Activated CD8-positive, alpha-beta T cell treated with anti-CD3 and anti-CD28 coated beads, Interleukin-2, amount 10 ng/mL, durations not matched to agents 7 days and 5 days (primary cell): ENCODE measurements at regions of chr11 and their contacts with region 1.

Region 1: GRCh38 chr11:72030472-72031045 is 31.9 kb downstream of the IL18BP start:
- DNase-seq: no peak
- ATAC-seq: no peak
- H3K4me3 Mint-ChIP-seq: no peak overlapping the region
- H3K27ac Mint-ChIP-seq: no peak overlapping the region
- H3K4me1 Mint-ChIP-seq: peaks cover 19% of the 10 kb centered on the region
- H3K27me3 Mint-ChIP-seq: no peaks in the 10 kb centered on the region

Region 2: GRCh38 chr11:71962428-71963038 is 68.0 kb before region 1 on chr11:
- CTCF ChIA-PET with region 1: no interaction called
- POLR2A ChIA-PET with region 1: no interaction called
- DNase-seq: no peak
- ATAC-seq: no peak
- H3K4me3 Mint-ChIP-seq: no peak overlapping the region
- H3K27ac Mint-ChIP-seq: no peak overlapping the region
- H3K4me1 Mint-ChIP-seq: peaks cover 7% of the 10 kb centered on the region
- H3K27me3 Mint-ChIP-seq: no peaks in the 10 kb centered on the region

Region 3: GRCh38 chr11:71998662-71999310 is 31.8 kb before region 1 on chr11 and contains the start of gene IL18BP:
- CTCF ChIA-PET with region 1: interaction called, 11 read pairs
- POLR2A ChIA-PET with region 1: no interaction called
- DNase-seq: peak; percentile 67
- ATAC-seq: peak; percentile 83
- H3K4me3 Mint-ChIP-seq: peak within 1 kb of the TSS; percentile 82
- H3K27ac Mint-ChIP-seq: peak within 1 kb of the TSS; percentile 97
- H3K4me1 Mint-ChIP-seq: peaks cover 22% of the 10 kb centered on the region
- H3K27me3 Mint-ChIP-seq: no peaks in the 10 kb centered on the region
- total RNA-seq, gene IL18BP: 15.9 to 16.2 TPM

Region 4: GRCh38 chr11:72048766-72049456 is 18.4 kb after region 1 on chr11:
- CTCF ChIA-PET with region 1: interaction called, 17 read pairs
- POLR2A ChIA-PET with region 1: no interaction called
- DNase-seq: no peak
- ATAC-seq: no peak
- H3K4me3 Mint-ChIP-seq: no peak overlapping the region
- H3K27ac Mint-ChIP-seq: no peak overlapping the region
- H3K4me1 Mint-ChIP-seq: no peaks in the 10 kb centered on the region
- H3K27me3 Mint-ChIP-seq: no peaks in the 10 kb centered on the region

Region 5: DNA sequence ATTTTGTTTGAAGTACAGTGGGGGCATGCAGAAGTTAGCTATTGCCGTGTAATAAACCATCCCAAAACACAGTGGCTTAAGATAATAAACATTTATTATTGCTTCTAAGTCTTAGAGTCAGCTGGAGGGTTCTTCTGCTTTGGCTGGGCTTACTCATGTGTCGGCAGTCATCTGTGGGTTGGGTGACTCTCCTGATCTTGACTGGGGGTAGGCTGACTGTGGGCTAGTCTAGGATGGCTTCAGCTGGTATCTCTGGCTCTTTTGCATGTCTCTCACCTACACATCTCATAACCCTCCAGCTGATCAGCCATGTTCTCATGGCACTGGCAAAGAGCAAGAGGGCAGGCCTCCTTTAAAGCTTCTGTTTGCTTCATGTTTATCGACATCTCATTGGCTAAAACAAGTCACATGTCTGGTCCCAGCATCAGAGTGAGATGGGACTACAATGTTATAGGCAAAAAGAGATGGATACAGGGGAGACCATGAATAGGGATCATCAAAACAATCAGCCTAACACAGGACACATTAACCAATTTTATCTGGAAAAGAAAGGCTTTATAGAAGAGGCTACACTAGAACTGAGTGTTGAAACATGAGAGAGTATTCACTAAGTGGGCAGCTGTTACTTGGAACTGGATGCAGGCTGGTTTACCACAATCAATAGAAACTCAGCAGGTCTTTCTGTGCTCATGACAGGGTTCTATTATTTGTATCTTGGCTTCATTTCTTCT is 55.2 kb after region 1 on chr11:
- CTCF ChIA-PET with region 1: interaction called, 163 read pairs
- POLR2A ChIA-PET with region 1: no interaction called
- DNase-seq: no peak
- ATAC-seq: no peak
- H3K4me3 Mint-ChIP-seq: no peak overlapping the region
- H3K27ac Mint-ChIP-seq: peak overlapping the region; percentile 1
- H3K4me1 Mint-ChIP-seq: peaks cover 24% of the 10 kb centered on the region
- H3K27me3 Mint-ChIP-seq: no peaks in the 10 kb centered on the region

Region 6: DNA sequence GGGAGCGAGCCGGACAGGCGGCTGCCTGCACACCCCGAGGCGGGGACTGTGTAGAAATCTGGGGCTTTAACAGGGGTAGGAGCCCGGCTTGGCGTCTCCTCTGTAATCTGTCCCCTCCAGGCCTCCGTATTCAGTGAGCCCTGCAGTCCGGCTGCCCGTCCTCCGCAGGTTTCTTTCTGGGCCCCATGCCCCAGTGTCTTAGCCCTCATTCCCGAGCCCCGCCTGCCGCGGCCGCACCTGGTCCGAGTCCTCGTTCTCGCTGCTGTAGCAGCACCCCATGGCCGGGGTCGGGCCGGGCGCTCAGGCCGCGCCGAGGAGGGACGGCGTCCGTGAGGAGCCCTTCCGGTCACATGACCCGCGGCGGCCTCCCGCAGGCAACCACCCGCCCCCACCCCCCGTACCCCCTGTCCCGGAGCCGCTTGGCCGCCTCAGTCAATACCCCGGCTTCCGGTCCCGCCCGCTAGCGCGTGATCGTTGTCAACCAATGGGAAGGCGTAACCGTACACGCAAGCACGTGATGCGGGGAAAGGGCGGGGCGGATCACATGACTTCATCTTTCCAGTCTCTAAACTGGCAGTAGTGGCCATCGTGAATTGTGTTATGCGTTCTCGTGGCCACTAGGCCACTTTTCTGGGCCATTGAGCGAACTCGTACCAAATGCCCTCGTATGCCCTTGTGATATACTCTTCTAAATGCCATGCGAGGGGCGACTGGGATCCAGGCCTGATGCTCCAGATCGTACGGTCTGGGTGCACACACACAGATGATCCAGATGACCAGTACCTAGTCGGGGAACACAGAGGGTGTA is 72.6 kb after region 1 on chr11 and contains the start of gene LAMTOR1:
- CTCF ChIA-PET with region 1: interaction called, 24 read pairs
- POLR2A ChIA-PET with region 1: no interaction called
- DNase-seq: peak; percentile 99
- ATAC-seq: peak; percentile 95
- H3K4me3 Mint-ChIP-seq: peak within 1 kb of the TSS; percentile 96
- H3K27ac Mint-ChIP-seq: peak within 1 kb of the TSS; percentile 87
- H3K4me1 Mint-ChIP-seq: peaks cover 38% of the 10 kb centered on the region
- H3K27me3 Mint-ChIP-seq: no peaks in the 10 kb centered on the region
- total RNA-seq, gene LAMTOR1: 72.7 to 77.0 TPM

Region 7: DNA sequence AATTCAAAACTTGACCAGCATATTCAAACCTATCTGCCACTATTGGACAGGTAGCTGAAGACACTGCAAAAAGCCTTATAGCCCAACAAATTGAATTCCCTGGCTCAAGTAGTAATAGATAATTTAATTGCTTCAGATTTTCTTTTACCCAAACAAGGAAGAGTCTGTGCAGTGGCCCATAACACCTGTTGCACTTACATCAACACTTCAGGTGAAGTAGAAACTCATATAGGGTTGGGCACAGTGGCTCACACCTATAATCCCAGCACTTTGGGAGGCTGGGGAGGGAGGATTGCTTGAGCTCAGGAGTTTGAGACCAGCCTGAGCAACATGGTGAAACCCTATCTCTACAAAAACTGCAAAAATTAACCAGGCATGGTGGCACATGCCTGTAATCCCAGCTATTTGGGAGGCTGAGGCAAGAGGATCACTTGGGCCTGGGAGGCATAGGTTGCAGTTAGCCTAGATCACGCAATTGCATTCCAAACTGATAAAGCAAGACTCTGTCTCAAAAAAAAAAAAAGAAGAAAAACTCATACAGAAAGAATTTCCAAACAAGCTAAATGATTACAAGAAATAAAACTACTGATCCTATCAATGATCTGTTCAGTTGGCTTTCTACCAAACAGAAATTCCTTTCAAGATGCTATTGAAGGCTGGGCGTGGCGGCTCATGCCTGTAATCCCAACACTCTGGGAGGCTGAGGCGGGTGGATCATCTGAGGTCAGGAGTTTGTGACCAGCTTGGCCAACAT is 114.4 kb after region 1 on chr11:
- CTCF ChIA-PET with region 1: interaction called, 82 read pairs
- POLR2A ChIA-PET with region 1: interaction called, 7 read pairs
- DNase-seq: no peak
- ATAC-seq: no peak
- H3K4me3 Mint-ChIP-seq: no peak overlapping the region
- H3K27ac Mint-ChIP-seq: no peak overlapping the region
- H3K4me1 Mint-ChIP-seq: peaks cover 24% of the 10 kb centered on the region
- H3K27me3 Mint-ChIP-seq: peaks cover 8% of the 10 kb centered on the region